ENCODE measurements at regions of chr1 and their contacts with region 1.

Region 1: DNA sequence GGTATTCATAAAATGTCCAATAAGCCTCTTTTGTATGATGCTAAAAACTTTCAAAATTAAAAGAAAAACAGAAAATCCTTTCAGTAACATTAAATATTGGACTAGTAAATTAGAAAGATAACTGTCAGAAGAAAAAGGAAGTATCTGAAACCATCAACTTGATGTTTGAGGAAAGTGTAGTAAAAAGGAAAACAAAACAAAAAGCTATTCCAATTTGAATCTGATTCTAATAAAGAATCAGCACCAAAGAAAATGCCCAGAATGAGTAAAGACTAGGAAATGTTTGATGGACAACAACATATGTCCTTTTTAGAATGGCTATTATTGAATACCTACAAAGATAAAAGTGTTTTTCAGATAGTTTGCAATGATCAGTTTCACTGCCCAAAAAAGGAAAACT is 79.9 kb upstream of the RBM34 start:
- DNase-seq: no peak
- CTCF ChIP-seq: no peak

Region 2: GRCh38 chr1:235169986-235170385 is 71.0 kb before region 1 on chr1:
- CTCF ChIA-PET with region 1: no interaction called
- POLR2A ChIA-PET with region 1: no interaction called
- DNase-seq: no peak
- CTCF ChIP-seq: no peak

Region 3: DNA sequence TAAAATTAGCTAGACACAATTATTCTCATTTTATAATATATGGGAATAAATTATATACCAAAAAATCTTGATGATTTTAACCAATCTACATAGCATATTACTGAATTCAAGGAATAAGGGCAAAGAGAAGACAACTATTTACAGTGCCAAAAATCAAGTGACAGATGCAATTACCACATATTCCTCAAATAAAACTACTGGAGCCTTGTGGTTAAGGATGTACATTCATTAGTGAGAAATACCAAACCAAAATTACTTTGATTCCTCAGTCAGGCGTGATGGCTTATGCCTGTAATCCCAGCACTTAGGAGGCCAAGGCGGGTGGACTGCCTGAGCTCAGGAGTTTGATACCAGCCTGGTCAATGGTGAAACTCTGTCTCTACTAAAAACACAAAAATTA is 11.1 kb before region 1 on chr1:
- CTCF ChIA-PET with region 1: interaction called, 10 read pairs
- POLR2A ChIA-PET with region 1: no interaction called
- DNase-seq: no peak
- CTCF ChIP-seq: no peak

Region 4: DNA sequence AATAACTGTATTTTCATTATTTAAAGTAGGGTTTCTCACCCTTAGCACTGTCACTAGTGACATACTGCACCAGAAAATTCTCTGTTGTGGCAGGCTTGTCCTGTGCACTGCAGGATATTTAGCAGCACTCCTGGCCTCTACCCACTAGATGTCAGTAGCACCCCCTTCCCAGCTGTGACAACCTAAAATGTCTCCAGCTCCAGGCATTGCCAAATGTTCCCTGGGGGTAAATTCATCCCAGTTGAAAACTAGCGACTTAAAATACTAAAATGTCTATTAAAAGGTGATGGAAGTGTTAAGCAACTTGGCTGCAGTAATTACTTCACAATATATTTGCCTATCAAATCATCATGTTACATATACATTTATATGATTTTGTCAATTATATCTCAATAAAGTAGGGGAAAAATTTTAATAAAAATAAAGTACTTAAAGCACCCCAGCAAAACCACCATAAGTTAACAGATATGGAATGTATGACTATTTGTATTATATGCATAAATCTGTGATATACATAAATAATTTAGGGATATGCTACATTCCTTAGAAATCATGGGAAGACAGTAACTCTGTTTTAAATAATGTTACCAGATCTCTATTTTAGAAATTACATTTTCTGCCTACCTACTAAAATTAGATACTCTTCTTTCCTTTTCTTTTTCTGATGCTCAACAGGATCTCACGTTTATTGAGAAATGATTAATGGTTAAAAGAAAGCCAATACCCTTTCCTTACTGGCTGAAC is 12.4 kb after region 1 on chr1:
- CTCF ChIA-PET with region 1: interaction called, 10 read pairs
- POLR2A ChIA-PET with region 1: interaction called, 3 read pairs
- DNase-seq: peak; percentile 34
- CTCF ChIP-seq: peak; percentile 85

Region 5: DNA sequence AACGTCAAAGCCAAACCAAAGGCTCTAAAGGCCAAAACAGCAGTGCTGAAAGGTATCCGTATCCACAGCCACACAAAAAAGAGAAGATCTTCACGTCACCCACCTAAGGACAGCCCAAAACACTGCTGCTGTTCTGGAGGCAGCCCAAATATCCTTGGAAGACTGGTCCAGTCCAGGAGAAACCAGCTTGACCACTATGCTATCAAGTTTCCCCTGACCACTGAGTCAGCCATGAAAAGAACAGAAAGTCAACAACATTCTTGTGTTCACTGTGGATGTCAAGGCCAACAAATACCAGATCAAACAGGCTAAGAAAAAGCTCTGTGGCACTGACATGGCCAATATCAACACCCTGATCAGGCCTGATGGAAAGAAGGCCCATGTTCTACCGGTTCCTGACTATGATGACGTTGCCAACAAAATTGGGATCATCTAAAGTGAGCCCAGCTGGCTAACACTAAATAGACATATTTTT is 55.0 kb after region 1 on chr1:
- CTCF ChIA-PET with region 1: no interaction called
- POLR2A ChIA-PET with region 1: no interaction called
- DNase-seq: no peak
- CTCF ChIP-seq: no peak

Region 6: DNA sequence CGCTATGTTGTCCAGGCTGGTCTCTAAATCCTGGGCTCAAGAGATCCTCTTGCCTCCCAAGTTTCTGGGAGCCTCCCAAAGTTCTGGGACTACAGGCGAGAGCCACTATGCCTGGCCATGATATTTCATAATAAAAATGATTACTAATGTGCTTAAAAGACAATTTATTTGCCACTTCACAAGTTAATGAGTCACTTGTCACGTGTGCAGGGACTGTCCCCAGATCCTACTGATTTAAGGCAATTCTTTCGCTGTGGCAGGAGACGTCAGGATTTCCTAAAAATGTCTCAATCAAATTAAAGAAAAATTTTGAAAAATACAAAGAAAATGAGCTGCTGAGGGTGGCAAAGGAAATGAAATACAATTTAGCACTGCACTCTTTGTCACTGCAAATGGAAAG is 219.8 kb after region 1 on chr1:
- CTCF ChIA-PET with region 1: no interaction called
- POLR2A ChIA-PET with region 1: no interaction called
- DNase-seq: no peak
- CTCF ChIP-seq: no peak

Measured in GM10248 (cell line).